ENCODE measurements at regions of chr12 and their contacts with region 1.

Region 1: DNA sequence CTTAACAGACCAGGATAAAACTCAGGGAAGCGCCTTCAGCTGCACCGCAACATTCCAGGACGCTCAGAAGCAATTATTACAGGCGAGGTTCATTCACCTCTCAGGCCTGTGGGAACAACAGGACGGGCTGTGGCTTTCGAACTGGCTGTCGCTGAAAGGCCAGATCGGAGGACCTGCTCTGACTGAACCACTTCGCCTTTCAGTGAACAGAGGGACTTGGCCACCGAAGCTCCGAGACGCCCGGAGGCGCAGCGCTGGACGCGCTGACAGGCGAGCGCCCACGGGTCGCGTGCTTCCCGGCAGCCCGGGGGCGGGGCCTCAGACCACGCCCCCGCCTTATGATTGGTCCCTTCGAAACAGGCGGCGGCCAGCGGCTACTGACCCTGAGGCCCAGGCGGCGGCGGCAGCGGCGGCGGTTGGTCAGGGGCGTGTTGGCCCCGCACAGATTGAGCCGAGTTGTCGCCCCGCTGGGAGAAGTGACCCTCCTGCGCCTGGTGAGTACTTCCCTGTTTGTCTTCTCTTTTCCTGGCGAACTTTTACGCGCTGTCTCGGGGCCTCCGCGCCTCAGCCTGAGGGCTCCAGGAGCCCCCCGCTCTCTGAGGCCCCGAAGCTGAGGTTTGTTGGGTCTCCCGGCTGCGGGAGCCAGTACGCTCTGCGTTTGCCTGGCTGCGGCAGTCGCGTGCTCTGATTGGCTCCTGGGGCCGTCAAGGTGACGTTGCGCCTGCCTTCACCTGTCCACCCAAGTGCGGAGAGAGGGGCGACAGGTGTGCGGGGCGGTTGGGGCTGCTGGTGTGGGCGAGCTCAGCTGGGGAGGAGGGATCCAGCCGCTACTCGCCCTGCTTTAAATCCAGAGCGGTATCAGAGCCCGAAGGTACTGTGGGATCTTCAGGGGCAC is at the start of gene GAS2L3:
- DNase-seq: peak; percentile 93
- ATAC-seq: peak; percentile 86
- H3K4me3 ChIP-seq: peak within 1 kb of the TSS; percentile 84
- H3K27ac ChIP-seq: peak within 1 kb of the TSS; percentile 14; the same call in 1 of the 2 replicates
- H3K4me1 ChIP-seq: peaks cover 29% of the 10 kb centered on the region
- H3K27me3 ChIP-seq: no peaks in the 10 kb centered on the region
- CTCF ChIP-seq: no peak
- total RNA-seq, gene GAS2L3: 24.8 and 27.8 TPM in 2 replicates

Region 2: GRCh38 chr12:100612606-100613005 is 39.1 kb after region 1 on chr12:
- CTCF ChIA-PET with region 1: no interaction called
- POLR2A ChIA-PET with region 1: no interaction called
- intact Hi-C with region 1: loop called (anchors 2 kb)
- DNase-seq: peak; percentile 53
- ATAC-seq: peak; percentile 98
- H3K4me3 ChIP-seq: no peak overlapping the region
- H3K27ac ChIP-seq: no peak overlapping the region
- H3K4me1 ChIP-seq: peaks cover 10% of the 10 kb centered on the region; the same call in 1 of the 2 replicates
- H3K27me3 ChIP-seq: no peaks in the 10 kb centered on the region
- CTCF ChIP-seq: no peak

Region 3: GRCh38 chr12:100668945-100669536 is 95.5 kb after region 1 on chr12:
- CTCF ChIA-PET with region 1: no interaction called
- POLR2A ChIA-PET with region 1: no interaction called
- intact Hi-C with region 1: loop called (anchors 5 kb)
- DNase-seq: peak; percentile 87
- ATAC-seq: peak; percentile 96
- H3K4me3 ChIP-seq: no peak overlapping the region
- H3K27ac ChIP-seq: no peak overlapping the region
- H3K4me1 ChIP-seq: no peaks in the 10 kb centered on the region
- H3K27me3 ChIP-seq: peaks cover 19% of the 10 kb centered on the region
- CTCF ChIP-seq: peak; percentile 98

Region 4: GRCh38 chr12:100733817-100734593 is 160.5 kb after region 1 on chr12:
- CTCF ChIA-PET with region 1: no interaction called
- POLR2A ChIA-PET with region 1: no interaction called
- intact Hi-C with region 1: loop called (anchors 5 kb)
- DNase-seq: peak; percentile 55
- ATAC-seq: no peak
- H3K4me3 ChIP-seq: no peak overlapping the region
- H3K27ac ChIP-seq: no peak overlapping the region
- H3K4me1 ChIP-seq: no peaks in the 10 kb centered on the region
- H3K27me3 ChIP-seq: peaks cover 24% of the 10 kb centered on the region
- CTCF ChIP-seq: peak; percentile 65

Measured in PC-3 (cell line).